Psoas muscle (tissue), 8 donors: ENCODE measurements at regions of chr3 and their contacts with region 1.

Region 1: DNA sequence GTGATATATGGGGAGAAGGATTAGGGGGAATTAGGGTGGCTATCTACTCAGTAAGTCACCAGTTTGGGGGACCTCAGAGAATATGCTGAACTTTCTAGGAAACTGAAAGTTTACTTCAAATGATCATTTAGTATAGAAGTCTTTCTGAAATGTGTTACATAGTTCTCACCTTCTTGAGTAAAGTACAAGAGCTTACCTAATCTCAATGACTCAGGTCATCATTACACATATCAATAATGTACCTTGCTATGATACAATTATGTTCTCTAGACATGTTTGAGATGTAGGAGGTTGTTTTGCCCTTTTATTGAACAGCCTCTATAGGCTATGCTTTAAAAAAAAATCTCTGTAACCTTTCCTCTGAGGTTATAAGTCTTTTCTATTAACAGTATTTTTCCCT is 50.7 kb downstream of the TMEM41A start:
- DNase-seq: no peak
- ATAC-seq: no peak
- H3K4me3 ChIP-seq: no peak overlapping the region
- H3K27ac ChIP-seq: no peak overlapping the region
- H3K4me1 ChIP-seq: no peaks in the 10 kb centered on the region
- H3K27me3 ChIP-seq: no peaks in the 10 kb centered on the region
- CTCF ChIP-seq: no peak

Region 2: DNA sequence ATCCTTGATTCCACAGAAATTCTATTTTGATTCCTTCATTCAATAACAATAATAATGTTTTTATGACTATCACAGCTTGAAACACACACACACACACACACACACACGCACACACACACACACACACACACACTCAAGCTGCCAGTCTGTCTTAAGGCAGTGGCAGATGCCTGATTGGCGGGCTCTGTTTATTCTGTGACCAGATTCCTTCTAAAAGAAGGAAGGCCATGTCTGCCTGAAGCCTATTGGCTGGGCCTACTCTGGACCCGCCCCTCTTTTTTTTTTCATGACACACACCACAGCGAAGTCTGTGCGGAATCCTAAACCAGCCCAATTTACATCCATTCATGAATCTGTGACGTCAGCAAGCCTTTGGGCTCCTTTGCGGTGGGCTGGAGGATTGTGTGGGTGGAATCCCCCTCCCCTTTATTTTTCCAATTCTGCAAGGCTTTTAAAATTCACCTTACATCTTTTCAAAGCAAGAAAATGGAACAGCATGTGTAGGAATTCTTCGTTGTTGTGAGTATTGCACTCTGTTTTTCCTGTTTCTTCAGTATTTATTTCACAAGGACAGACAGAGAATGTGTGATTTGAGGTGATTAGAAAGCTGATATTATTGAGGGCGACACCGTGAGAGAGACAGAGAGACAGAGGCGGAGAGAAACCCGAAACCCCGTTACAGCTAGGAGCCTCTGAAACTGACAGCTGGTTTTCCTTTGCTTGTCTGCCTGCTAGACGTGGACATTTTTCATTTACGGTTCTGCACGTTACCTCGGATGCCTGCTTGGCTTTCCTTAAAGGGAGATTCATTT is 85.1 kb before region 1 on chr3 and contains the start of gene MAP3K13:
- intact Hi-C with region 1: loop called in 1 of 2 experiments (anchors 5 kb)
- DNase-seq: peak; percentile 71 to 81
- ATAC-seq: peak; percentile 98 to 99 (median 99)
- H3K4me3 ChIP-seq: peak within 1 kb of the TSS; percentile 70
- H3K27ac ChIP-seq: peak within 1 kb of the TSS; percentile 72
- H3K4me1 ChIP-seq: no peaks in the 10 kb centered on the region
- H3K27me3 ChIP-seq: no peaks in the 10 kb centered on the region
- CTCF ChIP-seq: no peak
- total RNA-seq, gene MAP3K13: 5.0 to 7.6 (median 6.9) TPM

Region 3: DNA sequence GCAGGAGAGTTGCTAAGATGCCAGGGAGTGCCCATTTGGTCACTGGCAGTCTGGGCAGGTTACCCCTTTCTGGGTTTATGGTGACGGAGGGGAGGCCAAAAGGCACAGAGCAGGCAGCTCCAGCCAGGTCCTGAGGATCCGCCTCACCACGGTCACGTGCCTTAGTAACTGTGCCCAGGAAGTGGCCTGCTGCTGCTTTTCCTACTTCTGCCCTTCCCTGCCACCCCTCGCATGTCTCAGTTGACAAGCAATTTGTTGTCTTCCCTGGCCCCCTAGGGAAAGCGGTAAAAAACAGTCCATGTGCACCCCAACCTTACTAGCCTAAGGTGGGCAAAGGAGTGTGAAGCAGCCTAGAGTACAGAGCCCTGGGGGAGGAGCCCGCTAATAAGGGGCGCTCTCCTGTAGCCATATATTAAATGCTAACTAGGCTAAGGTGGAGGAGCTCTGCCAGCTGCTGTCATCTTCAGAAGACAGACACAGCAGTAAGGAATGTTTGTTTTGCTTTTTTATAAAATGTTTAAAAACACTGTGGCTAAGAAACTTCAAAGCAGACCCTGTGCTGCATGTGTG is 113.4 kb after region 1 on chr3:
- intact Hi-C with region 1: no loop called
- DNase-seq: peak; percentile 29 to 61
- ATAC-seq: no peak
- H3K4me3 ChIP-seq: no peak overlapping the region
- H3K27ac ChIP-seq: no peak overlapping the region
- H3K4me1 ChIP-seq: no peaks in the 10 kb centered on the region
- H3K27me3 ChIP-seq: peaks cover 0 to 9% (median 3%) of the 10 kb centered on the region in 3 donors
- CTCF ChIP-seq: no peak